Left colon (tissue), 2 donors: ENCODE measurements at regions of chr1 and their contacts with region 1.

Region 1: DNA sequence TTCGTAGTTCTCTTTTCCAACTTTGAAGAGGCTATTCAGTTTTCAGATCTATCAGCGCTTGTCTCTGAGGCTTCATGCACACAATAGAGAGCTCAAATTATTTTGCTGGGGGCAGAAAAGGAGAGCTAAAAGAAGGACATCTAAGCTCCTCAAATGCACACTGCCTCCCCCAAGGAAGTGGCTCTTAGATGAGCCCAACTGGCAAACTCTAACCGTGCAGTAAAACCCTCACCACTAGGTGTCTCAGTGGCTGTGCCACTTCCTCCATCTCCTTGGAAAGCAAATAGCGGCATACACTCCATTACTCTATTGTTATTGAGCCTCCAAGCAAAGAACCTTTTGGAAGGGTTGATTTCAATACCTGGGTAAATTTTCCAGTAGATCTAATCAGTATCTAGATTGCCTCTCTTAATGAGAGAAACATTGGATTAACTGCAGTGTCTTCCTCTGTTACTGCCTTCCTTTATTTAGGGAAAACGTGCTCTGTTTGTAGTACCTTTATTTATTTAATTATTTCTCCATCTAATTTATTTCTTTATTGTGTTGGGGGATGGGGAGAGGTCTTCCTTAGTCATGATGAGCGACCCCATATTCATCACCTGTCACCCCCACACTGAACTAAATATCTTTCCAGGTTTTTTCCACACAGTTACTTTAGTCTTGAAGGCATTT is 9.2 kb upstream of the SFPQ start:
- DNase-seq: peak; percentile 54 to 64
- ATAC-seq: peak; percentile 98

Region 2: DNA sequence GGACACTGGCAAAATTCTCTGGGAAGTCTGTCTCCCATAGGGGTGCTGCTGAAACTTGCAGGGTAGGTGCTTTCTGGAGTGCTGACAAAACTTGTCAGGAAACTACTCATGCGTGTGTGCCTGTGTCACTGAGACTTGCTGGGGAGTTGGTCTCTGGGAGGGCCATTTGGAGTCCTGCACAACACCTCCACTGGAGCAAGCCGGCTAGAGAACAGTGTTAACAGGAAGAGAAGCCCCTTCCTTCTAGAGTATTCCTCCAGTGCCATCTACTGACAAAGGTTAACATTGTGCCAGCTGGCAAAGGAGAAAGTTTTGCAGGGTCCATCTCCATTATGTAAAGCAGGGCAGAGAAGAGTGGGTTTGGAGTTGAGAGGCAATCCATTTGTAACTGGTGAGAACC is 96.3 kb after region 1 on chr1:
- intact Hi-C with region 1: loop called in 1 of 2 experiments (anchors 5 kb)
- DNase-seq: peak in 1 of 2 donors; percentile 8
- ATAC-seq: peak; percentile 88

Region 3: GRCh38 chr1:35316264-35316663 is 114.1 kb after region 1 on chr1:
- intact Hi-C with region 1: no loop called
- DNase-seq: no peak
- ATAC-seq: no peak

Region 4: GRCh38 chr1:35406103-35406502 is 203.9 kb after region 1 on chr1:
- intact Hi-C with region 1: no loop called
- DNase-seq: no peak
- ATAC-seq: no peak